ENCODE measurements at regions of chr12 and their contacts with region 1.

Region 1: DNA sequence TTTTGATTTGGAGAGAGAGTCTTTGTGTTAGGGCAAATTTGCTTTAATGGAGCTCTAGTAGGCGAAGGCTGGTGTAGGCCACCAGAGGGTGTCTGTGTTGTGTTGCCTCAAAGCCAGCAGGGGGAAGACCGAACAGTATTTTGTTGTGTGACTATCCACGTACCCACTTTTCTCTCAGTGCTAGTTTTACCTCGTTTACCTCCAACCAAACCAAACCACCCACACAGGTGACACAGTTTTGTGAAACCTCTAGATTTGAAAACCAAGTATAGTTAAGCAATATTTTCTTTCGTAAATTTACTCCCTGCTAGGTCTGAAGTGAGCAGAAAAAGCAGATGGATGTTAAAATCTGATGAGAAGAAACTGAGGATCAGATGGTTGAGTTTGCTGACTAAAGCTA is 36.3 kb upstream of the NPFF start:
- DNase-seq: peak in 4 of 5 donors; percentile 56 to 87 (median 68)
- H3K4me3 ChIP-seq: no peak overlapping the region
- H3K27ac ChIP-seq: peak overlapping the region in 1 of 2 donors; percentile 61
- H3K4me1 ChIP-seq: peaks cover 0 to 4% (median 0%) of the 10 kb centered on the region in 3 donors
- H3K27me3 ChIP-seq: no peaks in the 10 kb centered on the region
- CTCF ChIP-seq: peak; percentile 88

Region 2: DNA sequence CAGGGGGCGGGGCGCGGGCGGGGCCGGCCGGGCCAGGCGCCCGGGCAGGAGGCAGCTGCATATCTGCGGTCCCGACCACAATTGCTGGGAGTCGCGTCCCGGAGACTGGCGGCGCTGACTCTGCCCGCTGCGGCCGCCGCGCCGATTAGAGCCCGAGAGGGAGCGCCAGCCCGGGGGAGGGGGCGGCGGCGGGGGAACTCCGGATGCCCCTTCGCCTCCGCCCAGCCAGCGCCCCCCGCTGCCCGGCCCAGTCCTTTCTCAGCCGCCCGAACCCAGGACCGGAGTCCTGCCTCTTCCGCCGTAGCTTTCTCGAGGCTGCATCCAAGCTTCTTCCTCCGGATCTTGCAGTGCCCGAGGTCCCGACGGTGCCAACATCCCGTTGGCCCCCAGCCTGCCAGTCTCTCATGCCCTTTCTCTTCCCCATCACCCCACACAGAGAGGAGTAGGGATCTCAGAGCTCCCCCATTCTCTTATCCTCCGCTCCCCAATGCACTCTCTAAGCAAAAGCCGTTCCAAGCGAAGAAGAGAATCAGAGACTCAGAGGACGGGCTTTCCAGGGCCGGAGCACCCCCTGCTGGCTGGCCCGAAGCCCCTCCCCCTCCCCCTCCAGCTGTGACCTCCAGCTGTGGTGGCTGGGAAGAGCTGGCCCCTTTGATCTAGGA is 198.6 kb before region 1 on chr12:
- intact Hi-C with region 1: no loop called
- DNase-seq: peak; percentile 88 to 95 (median 92)
- H3K4me3 ChIP-seq: peak overlapping the region; percentile 80 to 82 (median 81)
- H3K27ac ChIP-seq: peak overlapping the region; percentile 29 to 72
- H3K4me1 ChIP-seq: peaks cover 0 to 12% (median 0%) of the 10 kb centered on the region in 3 donors
- H3K27me3 ChIP-seq: no peaks in the 10 kb centered on the region
- CTCF ChIP-seq: peak; percentile 61

Region 3: DNA sequence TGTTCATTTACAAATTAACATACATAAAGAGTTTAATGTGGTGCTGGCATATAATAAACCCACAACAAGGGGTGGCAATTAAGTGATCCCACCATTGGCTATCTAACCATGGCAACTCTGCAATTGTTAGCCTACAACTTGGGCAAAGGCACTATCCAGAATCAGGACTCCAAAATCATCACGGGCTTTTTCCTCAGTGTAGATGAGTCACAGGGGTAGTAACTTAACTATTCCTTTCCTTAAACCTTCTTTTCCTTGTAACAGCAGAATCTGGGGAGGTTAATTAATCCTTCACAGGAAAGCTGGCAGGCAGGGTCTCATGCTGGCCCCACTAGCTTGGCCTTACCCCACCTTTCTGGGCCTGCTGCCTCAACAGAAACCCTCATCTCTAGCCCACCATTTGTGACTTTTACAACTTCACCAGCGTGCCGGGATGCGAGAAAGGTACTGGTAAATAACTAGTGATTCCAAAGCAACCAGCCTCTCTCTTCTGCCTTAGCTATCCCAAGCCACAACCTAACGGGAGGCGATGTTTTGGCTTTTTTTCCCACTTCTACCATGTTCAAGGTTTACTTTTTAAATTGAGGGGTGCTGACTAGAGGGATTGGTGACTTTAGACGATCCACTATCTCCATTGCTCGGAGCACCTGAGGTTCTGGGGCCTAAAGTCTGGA is 131.6 kb after region 1 on chr12:
- intact Hi-C with region 1: loop called (anchors 5 kb)
- DNase-seq: no peak
- H3K4me3 ChIP-seq: peak overlapping the region; percentile 84 to 98 (median 93)
- H3K27ac ChIP-seq: peak overlapping the region; percentile 95 to 96
- H3K4me1 ChIP-seq: peaks cover 0 to 12% (median 7%) of the 10 kb centered on the region in 3 donors
- H3K27me3 ChIP-seq: no peaks in the 10 kb centered on the region
- CTCF ChIP-seq: no peak

Measured in kidney (tissue), 22 donors.